Natural killer cell (primary cell): ENCODE measurements at regions of chr17 and their contacts with region 1.

Region 1: DNA sequence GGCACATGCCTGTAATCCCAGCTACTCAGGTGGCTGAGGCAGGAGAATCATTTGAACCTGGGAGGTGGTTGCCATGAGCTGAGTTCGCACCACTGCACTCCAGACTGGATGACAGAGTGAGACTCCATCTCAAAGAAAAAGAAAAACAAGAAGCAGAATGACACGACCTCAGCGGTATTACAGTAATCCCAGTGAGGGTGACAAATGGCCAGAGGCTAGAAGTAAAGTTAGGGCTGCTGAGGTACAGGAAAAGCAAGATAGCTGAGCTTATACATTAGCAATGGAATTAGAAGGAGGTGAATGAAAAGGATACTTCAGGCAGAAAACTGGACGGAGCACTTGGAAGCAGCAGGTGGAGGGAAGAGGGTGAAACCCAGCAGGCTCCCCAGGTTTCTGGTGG is 26.1 kb upstream of the AMZ2 start:
- DNase-seq: no peak
- ATAC-seq: peak in 1 of 3 donors; percentile 3
- H3K4me3 ChIP-seq: peak overlapping the region; percentile 66
- H3K4me3 Mint-ChIP-seq: peak overlapping the region; percentile 10
- H3K27ac ChIP-seq: peak overlapping the region; percentile 92
- H3K27ac Mint-ChIP-seq: peak overlapping the region; percentile 100
- H3K4me1 ChIP-seq: peaks cover 62% of the 10 kb centered on the region
- H3K4me1 Mint-ChIP-seq: peaks cover 67 to 70% of the 10 kb centered on the region in 2 donors
- H3K27me3 ChIP-seq: no peaks in the 10 kb centered on the region
- H3K27me3 Mint-ChIP-seq: no peaks in the 10 kb centered on the region
- CTCF ChIP-seq: no peak

Region 2: DNA sequence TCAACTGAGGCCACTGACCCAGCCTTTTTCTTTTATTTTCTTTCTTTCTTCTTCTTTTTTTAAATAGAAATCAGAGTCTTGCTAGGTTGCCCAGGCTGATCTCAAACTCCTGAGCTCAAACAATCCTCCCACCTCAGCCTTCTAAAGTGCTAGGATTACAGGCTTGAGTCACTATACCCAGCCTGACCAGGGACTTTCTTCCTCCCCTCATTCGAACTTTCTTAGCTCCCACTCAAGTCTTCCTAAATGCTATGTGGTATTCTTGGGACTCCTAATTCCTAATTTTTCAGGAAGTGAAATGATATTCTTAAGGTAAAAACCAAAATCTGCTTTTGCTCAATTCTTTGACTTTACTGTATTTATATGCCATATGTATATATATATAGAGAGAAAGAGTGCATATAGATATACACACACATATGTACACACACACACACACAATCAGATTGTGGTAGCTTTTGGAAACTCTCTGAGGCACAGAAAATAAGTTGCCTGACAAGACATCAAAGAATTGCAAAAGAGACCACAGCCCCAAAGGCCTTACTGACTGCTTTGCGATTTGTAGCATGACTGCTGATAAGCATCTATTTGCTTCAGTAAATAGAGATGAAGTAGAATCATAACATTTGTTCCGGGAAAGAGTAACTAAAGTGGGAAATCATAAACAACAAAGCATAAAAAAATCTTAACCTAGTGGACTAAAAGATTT is 16.6 kb after region 1 on chr17:
- intact Hi-C with region 1: loop called (anchors 1 kb)
- DNase-seq: peak in 1 of 2 donors; percentile 76
- ATAC-seq: no peak
- H3K4me3 ChIP-seq: peak overlapping the region; percentile 24
- H3K4me3 Mint-ChIP-seq: peak overlapping the region; percentile 90
- H3K27ac ChIP-seq: peak overlapping the region; percentile 93
- H3K27ac Mint-ChIP-seq: peak overlapping the region; percentile 98 to 100
- H3K4me1 ChIP-seq: peaks cover 65% of the 10 kb centered on the region
- H3K4me1 Mint-ChIP-seq: peaks cover 64 to 65% of the 10 kb centered on the region in 2 donors
- H3K27me3 ChIP-seq: no peaks in the 10 kb centered on the region
- H3K27me3 Mint-ChIP-seq: no peaks in the 10 kb centered on the region
- CTCF ChIP-seq: no peak

Region 3: DNA sequence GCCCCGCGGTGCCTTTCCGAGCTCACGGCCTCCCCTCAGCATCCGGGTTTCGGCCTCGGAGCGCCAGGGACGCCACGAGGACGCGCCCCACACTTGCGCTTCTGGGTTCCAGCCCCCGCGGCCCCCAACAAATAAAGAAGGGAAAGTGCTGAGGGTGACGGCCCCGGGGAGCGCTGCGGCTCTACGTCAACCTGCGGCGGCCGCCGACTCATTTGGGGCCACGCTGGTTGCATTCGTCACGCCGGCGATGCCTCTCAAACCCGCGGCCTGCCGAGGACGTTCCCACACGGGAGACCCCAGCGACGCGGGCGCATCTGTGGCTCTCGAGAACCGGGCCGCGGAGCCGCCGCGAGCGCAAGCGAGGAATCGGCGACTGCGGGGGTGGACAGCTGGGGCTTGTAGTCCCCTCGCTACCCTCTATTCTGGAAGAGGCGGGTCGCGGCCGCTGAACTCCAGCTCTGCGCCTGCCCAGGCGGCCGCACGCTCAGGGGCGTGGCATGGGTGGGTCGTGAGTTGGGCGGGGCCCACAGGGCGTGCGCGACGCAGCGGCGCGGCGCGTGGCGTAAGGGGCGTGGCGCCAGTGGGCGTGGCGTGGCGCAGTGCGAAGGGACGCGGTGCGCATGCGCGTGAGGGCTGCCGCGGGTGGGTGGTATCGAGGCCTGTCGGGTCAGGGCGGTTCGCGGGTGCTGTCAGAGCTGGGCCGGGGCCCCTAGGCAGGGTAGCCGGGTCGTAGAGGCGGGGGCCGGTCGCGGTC is 25.9 kb after region 1 on chr17 and contains the start of gene AMZ2:
- intact Hi-C with region 1: loop called (anchors 2 kb)
- DNase-seq: peak; percentile 99
- ATAC-seq: peak; percentile 81 to 95 (median 83)
- H3K4me3 ChIP-seq: peak within 1 kb of the TSS; percentile 95
- H3K4me3 Mint-ChIP-seq: peak within 1 kb of the TSS; percentile 82
- H3K27ac ChIP-seq: peak within 1 kb of the TSS; percentile 100
- H3K27ac Mint-ChIP-seq: peak within 1 kb of the TSS; percentile 99 to 100
- H3K4me1 ChIP-seq: peaks cover 37% of the 10 kb centered on the region
- H3K4me1 Mint-ChIP-seq: peaks cover 34 to 37% of the 10 kb centered on the region in 2 donors
- H3K27me3 ChIP-seq: no peaks in the 10 kb centered on the region
- H3K27me3 Mint-ChIP-seq: no peaks in the 10 kb centered on the region
- CTCF ChIP-seq: no peak
- total RNA-seq, gene AMZ2: 87.0 to 131 (median 107) TPM